Caco-2 (cell line): ENCODE measurements at regions of chr20 and their contacts with region 1.

Region 1: DNA sequence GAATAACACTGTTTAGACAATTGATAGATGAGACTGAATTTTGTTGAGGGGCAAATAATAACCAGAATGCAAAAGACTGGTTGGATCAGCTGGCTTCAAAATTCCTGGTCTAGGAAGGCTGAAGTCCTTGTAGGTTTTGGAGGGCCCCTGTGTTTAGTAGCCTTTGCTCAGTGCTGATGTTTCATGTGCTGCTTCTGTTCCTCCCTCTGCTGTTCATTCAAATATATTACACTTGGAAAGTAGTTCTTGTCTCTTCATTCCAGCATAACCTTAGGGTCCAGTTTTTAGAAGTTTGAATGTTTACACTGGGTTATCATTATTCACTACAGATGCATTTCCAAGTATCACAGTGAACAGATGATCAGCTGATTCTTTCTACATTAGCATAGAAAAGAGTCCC is 72.5 kb downstream of the FLRT3 start:
- DNase-seq: peak in 1 of 2 experiments; percentile 35
- H3K4me3 ChIP-seq: no peak overlapping the region
- H3K4me3 Mint-ChIP-seq: no peak overlapping the region
- H3K27ac Mint-ChIP-seq: no peak overlapping the region
- H3K4me1 ChIP-seq: peaks cover 8% of the 10 kb centered on the region; the same call in 1 of the 2 replicates
- H3K4me1 Mint-ChIP-seq: peaks cover 8% of the 10 kb centered on the region
- H3K27me3 ChIP-seq: no peaks in the 10 kb centered on the region
- H3K27me3 Mint-ChIP-seq: peaks cover 4% of the 10 kb centered on the region
- CTCF ChIP-seq: peak; percentile 49 to 62

Region 2: DNA sequence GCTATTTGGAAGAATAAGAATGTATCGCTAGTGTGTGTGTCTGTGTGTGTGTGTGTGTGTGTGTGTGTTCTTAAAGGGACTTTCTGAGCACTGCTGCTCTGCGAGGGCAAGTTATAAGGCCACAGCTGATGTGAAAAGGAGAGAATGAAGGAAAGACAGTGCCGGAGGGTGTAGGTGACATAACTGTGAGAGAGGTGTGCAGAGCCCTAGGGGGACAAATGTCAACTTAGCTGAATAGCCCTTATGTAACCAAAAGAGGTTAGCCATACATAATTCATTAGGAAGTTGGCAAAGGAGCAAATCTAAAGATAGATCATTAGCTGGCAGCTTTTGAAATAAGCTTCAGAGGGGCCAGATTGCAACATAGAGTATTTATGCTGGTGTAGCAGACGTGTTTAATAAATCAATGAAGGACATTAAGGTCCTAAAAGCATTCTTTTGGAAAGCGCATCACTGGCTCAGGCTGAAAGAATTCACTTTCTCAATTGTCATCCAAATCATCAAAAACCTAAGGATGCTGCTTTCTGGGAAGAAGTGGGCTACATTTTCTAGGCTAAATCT is 399.0 kb before region 1 on chr20:
- CTCF ChIA-PET with region 1: no interaction called
- POLR2A ChIA-PET with region 1: no interaction called
- intact Hi-C with region 1: no loop called
- DNase-seq: no peak
- H3K4me3 ChIP-seq: no peak overlapping the region
- H3K4me3 Mint-ChIP-seq: no peak overlapping the region
- H3K27ac Mint-ChIP-seq: no peak overlapping the region
- H3K4me1 ChIP-seq: no peaks in the 10 kb centered on the region
- H3K4me1 Mint-ChIP-seq: no peaks in the 10 kb centered on the region
- H3K27me3 ChIP-seq: no peaks in the 10 kb centered on the region; the same call in 1 of the 2 replicates
- H3K27me3 Mint-ChIP-seq: peaks cover 7% of the 10 kb centered on the region
- CTCF ChIP-seq: no peak

Region 3: GRCh38 chr20:14189794-14190402 is 75.0 kb before region 1 on chr20:
- CTCF ChIA-PET with region 1: no interaction called
- POLR2A ChIA-PET with region 1: no interaction called
- intact Hi-C with region 1: loop called (anchors 1 kb)
- DNase-seq: peak in 1 of 2 experiments; percentile 49
- H3K4me3 ChIP-seq: no peak overlapping the region
- H3K4me3 Mint-ChIP-seq: no peak overlapping the region
- H3K27ac Mint-ChIP-seq: no peak overlapping the region
- H3K4me1 ChIP-seq: peaks cover 4% of the 10 kb centered on the region; the same call in 1 of the 2 replicates
- H3K4me1 Mint-ChIP-seq: peaks cover 16% of the 10 kb centered on the region
- H3K27me3 ChIP-seq: no peaks in the 10 kb centered on the region
- H3K27me3 Mint-ChIP-seq: no peaks in the 10 kb centered on the region
- CTCF ChIP-seq: peak; percentile 27 to 50

Region 4: DNA sequence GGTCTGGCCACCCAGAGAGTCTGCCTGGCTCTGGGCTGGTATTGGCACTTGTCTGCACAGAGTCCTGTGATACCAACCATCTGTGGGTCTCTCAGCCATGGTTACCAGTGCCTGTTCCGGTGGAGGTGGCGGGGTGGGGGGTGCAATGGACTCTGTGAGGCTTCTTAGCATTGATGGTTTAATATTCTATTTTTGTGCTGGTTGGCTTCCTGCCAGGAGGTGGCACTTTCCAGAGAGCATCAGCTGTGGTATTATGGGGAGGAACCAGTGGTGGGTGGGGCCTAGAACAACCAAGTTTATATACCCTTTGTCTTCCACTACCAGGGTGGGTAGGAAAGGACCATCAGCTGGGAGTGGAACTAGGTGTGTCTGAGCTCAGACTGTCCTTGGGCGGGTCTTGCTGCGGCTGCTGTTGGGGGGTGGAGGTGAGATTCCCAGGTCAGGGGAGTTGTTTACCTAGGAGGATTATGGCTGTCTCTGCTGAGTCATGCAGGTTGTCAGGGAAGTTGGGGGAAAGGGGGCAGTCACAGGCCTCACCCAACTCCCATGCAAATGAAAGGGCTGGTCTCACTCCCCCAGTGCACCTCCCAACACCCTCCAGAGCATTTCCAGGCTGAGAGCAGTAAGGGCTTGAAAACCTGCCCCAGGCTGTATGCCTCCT is 44.9 kb before region 1 on chr20:
- CTCF ChIA-PET with region 1: no interaction called
- POLR2A ChIA-PET with region 1: no interaction called
- intact Hi-C with region 1: loop called (anchors 5 kb)
- DNase-seq: peak; percentile 72 to 88
- H3K4me3 ChIP-seq: no peak overlapping the region
- H3K4me3 Mint-ChIP-seq: peak overlapping the region; percentile 47
- H3K27ac Mint-ChIP-seq: peak overlapping the region; percentile 80
- H3K4me1 ChIP-seq: peaks cover 19% of the 10 kb centered on the region
- H3K4me1 Mint-ChIP-seq: no peaks in the 10 kb centered on the region
- H3K27me3 ChIP-seq: no peaks in the 10 kb centered on the region
- H3K27me3 Mint-ChIP-seq: no peaks in the 10 kb centered on the region
- CTCF ChIP-seq: no peak

Region 5: DNA sequence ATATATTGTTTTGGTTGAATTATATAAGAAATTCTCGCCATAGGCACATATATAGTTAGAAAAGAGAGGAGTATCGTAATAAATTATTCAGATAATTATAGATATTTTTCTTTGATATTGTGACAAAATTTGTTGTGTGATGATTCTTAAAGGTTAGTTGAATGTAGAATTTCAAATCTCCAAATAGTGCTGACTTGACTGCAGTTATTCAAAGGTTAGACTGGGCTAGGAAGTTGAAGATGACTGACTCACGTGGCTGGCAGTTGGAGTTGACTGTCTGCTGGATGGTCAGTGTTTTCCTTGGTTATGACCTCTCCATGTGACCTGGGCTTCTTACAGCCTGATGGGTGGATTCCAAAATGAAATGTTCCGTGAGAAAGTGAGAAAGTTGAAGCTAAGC is 17.3 kb after region 1 on chr20:
- CTCF ChIA-PET with region 1: no interaction called
- POLR2A ChIA-PET with region 1: no interaction called
- intact Hi-C with region 1: no loop called
- DNase-seq: no peak
- H3K4me3 ChIP-seq: no peak overlapping the region
- H3K4me3 Mint-ChIP-seq: no peak overlapping the region
- H3K27ac Mint-ChIP-seq: no peak overlapping the region
- H3K4me1 ChIP-seq: no peaks in the 10 kb centered on the region
- H3K4me1 Mint-ChIP-seq: no peaks in the 10 kb centered on the region
- H3K27me3 ChIP-seq: no peaks in the 10 kb centered on the region
- H3K27me3 Mint-ChIP-seq: no peaks in the 10 kb centered on the region
- CTCF ChIP-seq: no peak

Region 6: GRCh38 chr20:14948423-14948822 is 683.6 kb after region 1 on chr20:
- CTCF ChIA-PET with region 1: no interaction called
- POLR2A ChIA-PET with region 1: no interaction called
- intact Hi-C with region 1: no loop called
- DNase-seq: peak in 1 of 2 experiments; percentile 11
- H3K4me3 ChIP-seq: no peak overlapping the region
- H3K4me3 Mint-ChIP-seq: no peak overlapping the region
- H3K27ac Mint-ChIP-seq: no peak overlapping the region
- H3K4me1 ChIP-seq: no peaks in the 10 kb centered on the region
- H3K4me1 Mint-ChIP-seq: no peaks in the 10 kb centered on the region
- H3K27me3 ChIP-seq: no peaks in the 10 kb centered on the region
- H3K27me3 Mint-ChIP-seq: no peaks in the 10 kb centered on the region
- CTCF ChIP-seq: peak in 1 of 2 experiments; percentile 3